ENCODE measurements at regions of chrX and their contacts with region 1.

Region 1: DNA sequence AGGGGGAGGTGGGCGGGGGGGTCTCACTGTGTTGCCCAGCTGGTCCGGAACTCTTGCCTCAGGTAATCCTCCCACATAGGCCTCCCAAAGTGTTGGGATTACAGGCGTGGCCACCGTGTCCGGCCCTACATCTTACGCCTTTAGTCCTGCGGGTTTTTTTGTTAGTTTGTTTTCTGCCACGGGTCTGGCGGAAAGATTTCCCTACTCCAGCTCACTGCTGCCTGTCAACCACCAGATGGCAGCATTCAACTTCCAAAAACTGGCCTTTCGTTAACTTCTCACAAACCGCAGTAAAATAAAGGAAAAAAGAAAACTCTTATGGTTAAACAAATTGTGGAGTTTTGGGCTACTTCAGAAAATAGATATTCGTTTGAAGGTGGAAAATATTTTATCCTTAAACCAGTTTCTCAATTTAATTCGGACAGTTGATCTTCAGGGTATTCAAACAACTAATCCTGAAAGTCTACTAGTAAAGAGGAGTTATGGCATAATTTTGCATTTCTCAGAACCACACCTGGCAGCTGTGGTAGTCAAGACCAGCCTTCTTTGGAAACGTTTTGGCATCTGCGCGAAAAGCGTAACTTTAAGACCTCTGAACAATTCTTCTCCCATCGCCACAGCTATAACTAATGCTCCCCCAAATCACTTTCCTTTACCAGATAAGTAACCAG is 41.1 kb downstream of the LUZP4 start:
- DNase-seq: no peak
- H3K4me3 ChIP-seq: peak overlapping the region; percentile 45
- CTCF ChIP-seq: peak; percentile 49

Region 2: GRCh38 chrX:115350711-115351381 is 20.2 kb after region 1 on chrX:
- CTCF ChIA-PET with region 1: no interaction called
- POLR2A ChIA-PET with region 1: no interaction called
- DNase-seq: no peak
- H3K4me3 ChIP-seq: no peak overlapping the region
- CTCF ChIP-seq: no peak

Region 3: DNA sequence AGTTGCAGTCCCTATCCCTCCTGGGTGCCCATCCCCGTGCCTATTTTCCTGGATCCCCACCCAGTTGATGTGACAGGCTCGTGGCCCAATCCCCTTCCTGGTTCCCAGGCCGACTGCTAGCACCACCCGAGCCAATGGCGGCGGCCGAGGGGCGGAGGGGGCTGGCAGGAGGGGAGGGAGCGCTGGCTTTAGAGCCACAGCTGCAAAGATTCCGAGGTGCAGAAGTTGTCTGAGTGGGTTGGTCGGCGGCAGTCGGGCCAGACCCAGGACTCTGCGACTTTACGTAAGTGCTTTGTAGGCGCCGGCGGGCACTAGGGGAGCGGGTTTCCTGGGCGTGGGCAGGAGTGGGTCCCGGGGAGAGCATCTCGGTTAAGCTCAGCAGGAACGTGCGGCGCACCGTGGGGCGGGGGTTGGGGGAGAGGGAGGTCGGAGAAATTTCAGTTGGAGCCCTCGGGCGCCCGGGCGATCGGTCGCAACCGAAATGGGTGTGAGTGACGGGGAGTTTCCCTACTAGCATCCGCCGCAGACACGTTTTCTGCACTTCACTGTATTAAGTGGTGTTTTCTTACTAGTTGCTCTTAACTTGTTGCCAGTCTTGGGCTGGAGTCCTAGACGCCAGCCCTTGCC is 230.5 kb after region 1 on chrX and contains the start of gene PLS3:
- CTCF ChIA-PET with region 1: interaction called, 12 read pairs
- POLR2A ChIA-PET with region 1: no interaction called
- DNase-seq: no peak
- H3K4me3 ChIP-seq: peak within 1 kb of the TSS; percentile 75
- CTCF ChIP-seq: no peak

Region 4: DNA sequence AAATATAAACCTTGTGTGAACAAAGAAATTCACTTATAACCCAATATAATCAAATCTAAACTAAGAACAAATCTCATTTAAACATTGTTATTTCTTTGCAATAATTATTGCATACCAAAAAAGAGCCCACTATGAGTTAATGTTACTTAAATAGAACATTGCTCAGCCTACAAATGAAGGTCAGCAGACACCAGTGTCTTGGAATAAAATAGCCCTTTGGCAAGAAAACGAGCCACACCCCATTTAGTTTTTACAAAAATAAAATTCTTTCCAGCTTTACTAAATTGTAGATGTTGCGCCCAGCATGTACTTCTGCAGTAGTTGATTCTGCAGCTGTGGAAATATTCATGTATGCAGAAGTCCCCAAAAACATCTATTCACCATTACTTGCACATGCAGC is 242.6 kb after region 1 on chrX:
- CTCF ChIA-PET with region 1: no interaction called
- POLR2A ChIA-PET with region 1: no interaction called
- DNase-seq: no peak
- H3K4me3 ChIP-seq: no peak overlapping the region
- CTCF ChIP-seq: no peak

Region 5: GRCh38 chrX:115642895-115643530 is 312.4 kb after region 1 on chrX:
- CTCF ChIA-PET with region 1: interaction called, 134 read pairs
- POLR2A ChIA-PET with region 1: interaction called, 3 read pairs
- DNase-seq: no peak
- H3K4me3 ChIP-seq: no peak overlapping the region
- CTCF ChIP-seq: peak; percentile 46

Region 6: DNA sequence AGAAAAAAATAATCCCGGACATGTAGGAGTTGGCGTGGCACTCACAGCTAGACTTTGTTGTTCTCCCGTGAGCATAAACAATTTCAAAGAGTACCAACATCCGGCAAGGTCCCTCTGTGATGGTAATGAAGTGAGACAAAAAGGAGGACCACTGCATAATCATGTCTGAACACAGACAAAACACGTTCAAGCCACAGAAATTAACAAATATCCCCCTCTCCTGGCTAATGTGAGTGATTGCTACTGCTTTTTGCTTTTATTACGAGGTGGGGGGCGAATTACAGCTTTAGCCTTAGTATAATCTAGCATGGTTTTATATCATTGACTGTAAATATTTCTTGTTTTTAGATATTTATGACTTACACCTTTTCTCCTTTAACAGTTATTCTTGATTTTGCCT is 348.8 kb after region 1 on chrX:
- CTCF ChIA-PET with region 1: interaction called, 42 read pairs
- POLR2A ChIA-PET with region 1: no interaction called
- DNase-seq: no peak
- H3K4me3 ChIP-seq: no peak overlapping the region
- CTCF ChIP-seq: peak; percentile 29

Region 7: DNA sequence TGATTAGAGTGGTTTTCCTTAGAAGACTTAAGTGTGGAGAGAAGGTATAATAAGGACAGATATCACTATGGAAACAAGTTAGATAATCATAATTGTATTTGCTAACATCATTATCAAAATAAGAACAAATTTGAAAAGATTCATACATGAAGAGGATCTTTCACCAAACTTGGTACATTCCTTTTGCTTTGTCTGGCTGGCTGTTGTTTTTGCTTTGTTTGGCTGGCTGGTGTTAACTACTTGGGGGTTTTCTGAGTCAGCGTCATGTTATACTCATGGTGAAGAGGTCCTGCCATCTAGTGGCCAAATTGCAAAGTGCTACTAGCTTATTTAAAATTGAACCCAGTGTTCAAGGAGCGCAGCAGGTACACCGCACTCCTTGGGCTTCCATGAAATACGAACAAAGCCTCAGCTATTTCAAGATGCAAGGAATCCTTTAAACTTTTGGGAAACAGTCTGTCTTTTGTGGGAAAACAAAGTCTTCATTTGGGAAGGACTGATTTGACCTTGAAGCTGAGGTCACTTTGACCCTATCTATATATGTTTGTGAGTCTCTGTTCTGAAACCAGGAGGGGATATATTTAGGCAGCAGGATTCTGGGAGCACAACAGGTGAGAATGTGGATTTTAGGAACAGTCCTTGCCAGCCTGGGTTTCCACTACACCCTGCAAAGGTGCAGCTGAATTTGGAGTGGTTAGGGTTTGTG is 360.0 kb after region 1 on chrX:
- CTCF ChIA-PET with region 1: interaction called, 15 read pairs
- POLR2A ChIA-PET with region 1: no interaction called
- DNase-seq: no peak
- H3K4me3 ChIP-seq: no peak overlapping the region
- CTCF ChIP-seq: peak; percentile 42

Measured in AG04449 (cell line).